Gastrocnemius medialis (tissue), 4 donors: ENCODE measurements at regions of chr16 and their contacts with region 1.

Region 1: DNA sequence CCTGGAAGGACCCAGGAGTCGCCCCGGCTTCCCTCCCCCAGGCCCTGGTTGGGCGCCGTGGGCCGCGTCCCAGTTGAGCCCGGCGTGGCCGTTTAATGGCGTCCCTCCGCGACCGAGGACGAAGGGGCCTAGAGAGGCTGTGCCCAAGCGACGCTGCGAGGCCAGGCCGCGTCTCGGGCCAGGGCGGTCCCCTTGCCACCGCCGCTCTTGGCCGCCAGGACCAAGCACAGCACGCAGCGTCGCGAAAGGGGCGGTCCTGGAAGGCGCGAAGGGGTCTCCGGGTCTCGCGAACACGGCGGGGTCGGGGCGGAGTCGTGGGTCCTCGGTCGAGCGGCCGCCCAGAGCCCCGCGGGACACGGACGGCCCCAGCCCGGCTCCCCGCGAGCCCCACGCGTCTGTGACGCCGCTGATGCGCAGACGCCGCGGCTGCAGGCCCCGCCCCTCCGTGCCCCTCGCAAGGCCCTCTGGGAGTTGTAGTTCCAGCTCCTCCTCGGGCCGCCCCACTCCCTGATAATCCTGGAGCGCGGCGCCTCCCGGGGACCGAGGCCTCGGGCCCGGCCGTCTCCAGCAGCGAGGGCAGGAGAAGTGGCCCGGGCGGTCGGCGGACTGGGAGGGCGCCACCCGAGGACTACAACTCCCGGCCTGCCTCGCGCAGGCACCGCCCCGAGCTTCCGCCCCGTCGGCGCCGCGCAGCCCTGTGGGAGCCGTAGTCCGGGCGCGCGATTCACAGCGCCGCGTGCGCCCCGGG is at the start of gene CAPN15:
- DNase-seq: peak; percentile 70 to 83
- ATAC-seq: peak; percentile 82 to 83
- H3K4me3 ChIP-seq: peak within 1 kb of the TSS; percentile 77 to 87 (median 83)
- H3K27ac ChIP-seq: peak within 1 kb of the TSS; percentile 94 to 100 (median 98)
- H3K4me1 ChIP-seq: peaks cover 31 to 42% of the 10 kb centered on the region in 2 donors
- H3K27me3 ChIP-seq: no peaks in the 10 kb centered on the region
- CTCF ChIP-seq: peak; percentile 26 to 57 (median 40)
- POLR2A ChIP-seq: peak; percentile 93
- total RNA-seq, gene CAPN15: 22.3 to 37.8 (median 27.4) TPM

Region 2: DNA sequence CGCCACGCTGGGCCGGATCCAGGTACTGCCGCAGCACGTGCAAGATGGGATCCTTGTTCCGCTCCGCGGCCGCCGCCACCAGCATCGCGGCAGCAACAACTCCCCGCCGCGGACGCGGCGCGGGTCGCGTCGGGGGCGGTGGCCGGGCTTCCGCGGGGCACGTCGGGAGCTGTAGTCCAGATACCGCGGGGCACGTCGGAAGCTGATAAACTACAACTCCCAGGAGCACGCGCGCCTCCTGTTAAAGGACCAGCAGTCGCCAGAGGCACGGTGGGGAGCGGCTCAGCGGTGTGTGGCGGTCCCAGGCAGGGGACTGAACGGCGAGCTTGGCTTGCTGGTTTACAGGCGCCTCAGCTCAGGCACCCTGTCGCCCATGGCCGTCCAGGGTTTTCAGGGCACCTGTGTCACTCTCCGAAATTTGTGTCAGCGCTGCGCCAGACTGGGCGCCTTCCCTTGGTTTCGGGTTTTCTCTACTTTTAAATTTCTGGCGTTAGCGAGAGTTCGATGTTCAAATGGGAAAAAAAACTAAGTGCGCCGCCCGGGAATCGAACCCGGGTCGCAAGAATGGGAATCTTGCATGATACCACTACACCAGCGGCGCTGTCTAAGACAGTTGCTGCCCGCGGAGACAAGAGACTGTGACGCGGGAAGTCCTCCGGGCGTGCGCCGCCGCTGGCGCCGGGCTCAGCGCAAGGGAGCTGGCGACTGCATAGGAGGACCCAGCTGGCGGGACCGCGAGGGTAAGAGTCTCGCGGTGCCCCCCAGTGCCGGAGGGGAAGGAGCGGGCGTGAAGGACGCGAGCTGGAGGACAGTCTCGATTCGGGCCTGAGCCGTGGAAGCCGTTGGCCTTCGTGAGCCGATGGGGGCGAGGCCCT is 109.3 kb after region 1 on chr16 and contains the start of gene METTL26:
- in situ Hi-C with region 1: no loop called
- intact Hi-C with region 1: loop called (anchors 2 kb)
- DNase-seq: peak; percentile 94 to 97
- ATAC-seq: peak; percentile 86 to 89
- H3K4me3 ChIP-seq: peak within 1 kb of the TSS; percentile 81 to 98 (median 96)
- H3K27ac ChIP-seq: peak within 1 kb of the TSS; percentile 94 to 100 (median 98)
- H3K4me1 ChIP-seq: peaks cover 11 to 24% of the 10 kb centered on the region in 2 donors
- H3K27me3 ChIP-seq: no peaks in the 10 kb centered on the region
- CTCF ChIP-seq: no peak
- POLR2A ChIP-seq: peak; percentile 66 to 68
- total RNA-seq, gene METTL26: 114 to 212 (median 141) TPM